ENCODE measurements at regions of chr21 and their contacts with region 1.

Region 1: DNA sequence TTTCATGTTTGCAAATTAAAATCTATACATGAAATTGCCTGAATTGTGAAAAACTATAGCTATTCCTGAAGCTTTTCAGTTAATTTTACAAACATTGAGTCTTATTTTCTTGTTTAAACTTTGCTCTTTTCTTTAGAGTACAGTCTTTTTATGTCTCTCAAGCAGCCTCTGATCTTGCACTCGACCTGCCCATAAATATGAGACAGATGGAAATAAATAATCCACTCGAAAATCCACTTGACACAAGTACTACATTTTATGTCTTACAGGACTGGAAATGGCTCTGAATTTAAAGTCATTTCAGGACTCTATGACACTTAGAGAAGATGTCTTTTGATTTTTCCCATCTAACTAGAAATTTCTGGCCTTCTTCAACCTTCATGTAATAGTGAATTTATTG is 283.8 kb downstream of the USP25 start:
- DNase-seq: no peak
- ATAC-seq: no peak
- H3K4me3 ChIP-seq: no peak overlapping the region
- H3K27ac ChIP-seq: no peak overlapping the region
- H3K4me1 ChIP-seq: no peaks in the 10 kb centered on the region
- H3K27me3 ChIP-seq: no peaks in the 10 kb centered on the region
- CTCF ChIP-seq: no peak

Region 2: DNA sequence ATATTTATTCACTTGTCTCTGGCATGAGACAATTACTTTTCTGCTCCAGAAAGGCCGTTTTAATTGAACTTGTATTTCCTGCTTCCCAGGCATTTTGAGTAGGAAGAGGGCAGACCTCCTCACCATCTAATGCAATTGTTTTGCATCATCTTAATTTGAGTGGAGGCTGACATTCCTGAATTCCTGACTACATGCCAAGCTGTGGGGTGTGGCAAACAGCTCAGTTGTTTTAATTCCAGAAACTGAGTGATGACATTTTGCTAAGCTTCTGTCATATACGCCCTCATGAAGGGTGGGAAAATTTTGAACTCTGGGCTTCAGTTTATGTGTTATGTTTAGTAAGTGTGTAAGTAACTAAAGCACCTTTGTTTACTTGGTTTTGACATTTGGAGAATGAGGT is 409.1 kb before region 1 on chr21:
- intact Hi-C with region 1: no loop called
- DNase-seq: no peak
- ATAC-seq: no peak
- H3K4me3 ChIP-seq: no peak overlapping the region
- H3K27ac ChIP-seq: no peak overlapping the region
- H3K4me1 ChIP-seq: no peaks in the 10 kb centered on the region
- H3K27me3 ChIP-seq: peaks cover 0 to 18% (median 0%) of the 10 kb centered on the region in 7 donors
- CTCF ChIP-seq: no peak

Region 3: GRCh38 chr21:15856813-15857212 is 156.8 kb before region 1 on chr21:
- intact Hi-C with region 1: no loop called
- DNase-seq: no peak
- ATAC-seq: peak in 1 of 8 donors; percentile 44
- H3K4me3 ChIP-seq: no peak overlapping the region
- H3K27ac ChIP-seq: no peak overlapping the region
- H3K4me1 ChIP-seq: peaks cover 0 to 12% (median 0%) of the 10 kb centered on the region in 9 donors
- H3K27me3 ChIP-seq: no peaks in the 10 kb centered on the region
- CTCF ChIP-seq: no peak

Region 4: GRCh38 chr21:16071092-16071491 is 57.5 kb after region 1 on chr21:
- intact Hi-C with region 1: loop called in 1 of 10 experiments (anchors 10 kb)
- DNase-seq: no peak
- ATAC-seq: no peak
- H3K4me3 ChIP-seq: peak overlapping the region in 1 of 10 donors; percentile 5
- H3K27ac ChIP-seq: no peak overlapping the region
- H3K4me1 ChIP-seq: no peaks in the 10 kb centered on the region
- H3K27me3 ChIP-seq: no peaks in the 10 kb centered on the region
- CTCF ChIP-seq: no peak

Region 5: DNA sequence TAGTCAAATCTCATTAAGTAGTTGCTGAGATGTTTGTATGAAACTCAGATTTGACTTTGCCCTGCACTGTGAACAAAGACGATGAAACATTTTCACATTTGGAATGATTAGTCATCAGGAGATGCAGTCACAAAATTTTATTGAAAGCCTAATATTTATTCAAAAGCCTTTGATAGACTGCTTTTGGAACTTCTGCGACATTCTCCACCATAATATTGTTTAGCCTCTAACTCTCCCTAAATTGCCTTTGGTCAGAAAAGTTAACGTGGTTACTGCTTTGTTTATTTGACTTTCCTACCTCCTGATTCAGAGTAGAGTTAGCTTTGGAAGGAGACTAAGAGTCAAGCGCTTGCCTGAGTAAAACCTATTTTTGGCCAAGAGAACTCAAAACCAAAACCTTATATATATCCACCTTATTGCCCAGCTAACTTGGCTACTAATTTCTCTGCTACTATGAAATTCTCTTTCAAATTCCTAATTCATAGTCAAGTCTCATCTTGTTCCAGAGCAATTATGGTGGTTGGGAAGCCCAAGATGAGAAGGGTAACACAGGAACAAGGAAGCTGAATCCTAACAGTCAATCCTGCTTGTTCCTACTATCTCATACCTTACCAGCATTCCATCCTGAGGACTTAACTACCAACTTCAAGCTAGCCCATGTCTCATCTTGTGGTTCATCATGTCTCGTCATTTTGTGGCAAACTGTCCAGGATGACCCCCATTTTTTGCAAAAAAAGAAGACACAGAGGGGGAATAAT is 145.8 kb after region 1 on chr21:
- intact Hi-C with region 1: no loop called
- DNase-seq: no peak
- ATAC-seq: no peak
- H3K4me3 ChIP-seq: no peak overlapping the region
- H3K27ac ChIP-seq: no peak overlapping the region
- H3K4me1 ChIP-seq: no peaks in the 10 kb centered on the region
- H3K27me3 ChIP-seq: no peaks in the 10 kb centered on the region
- CTCF ChIP-seq: no peak

Measured in heart right ventricle (tissue), 16 donors.